K562 (cell line): ENCODE measurements at regions of chr1 and their contacts with region 1.

Region 1: GRCh38 chr1:198633675-198634121 is 5.1 kb upstream of the PTPRC start:
- DNase-seq: peak in 2 of 4 experiments; percentile 64 to 86
- ATAC-seq: peak; percentile 80
- H3K4me3 ChIP-seq: no peak overlapping the region
- H3K27ac ChIP-seq: peak overlapping the region; percentile 61
- H3K4me1 ChIP-seq: peaks cover 7 to 22% of the 10 kb centered on the region in 2 experiments; a peak in 2 of 5 replicates
- H3K27me3 ChIP-seq: no peaks in the 10 kb centered on the region
- CTCF ChIP-seq: no peak; a peak in 1 of 6 replicates
- EP300 ChIP-seq: peak; percentile 90
- POLR2A ChIP-seq: no peak
- RAD21 ChIP-seq: peak; percentile 44 to 54

Region 2: GRCh38 chr1:198520524-198521254 is 113.0 kb before region 1 on chr1:
- CTCF ChIA-PET with region 1: interaction called, 4 read pairs
- POLR2A ChIA-PET with region 1: no interaction called
- in situ Hi-C with region 1: no loop called
- intact Hi-C with region 1: loop called (anchors 5 kb)
- DNase-seq: no peak
- ATAC-seq: no peak
- H3K4me3 ChIP-seq: no peak overlapping the region
- H3K27ac ChIP-seq: no peak overlapping the region
- H3K4me1 ChIP-seq: peaks cover 0 to 8% of the 10 kb centered on the region in 2 experiments; a peak in 2 of 5 replicates
- H3K27me3 ChIP-seq: no peaks in the 10 kb centered on the region
- CTCF ChIP-seq: no peak
- EP300 ChIP-seq: no peak
- POLR2A ChIP-seq: no peak
- RAD21 ChIP-seq: no peak